ENCODE measurements at regions of chr7 and their contacts with region 1.

Region 1: DNA sequence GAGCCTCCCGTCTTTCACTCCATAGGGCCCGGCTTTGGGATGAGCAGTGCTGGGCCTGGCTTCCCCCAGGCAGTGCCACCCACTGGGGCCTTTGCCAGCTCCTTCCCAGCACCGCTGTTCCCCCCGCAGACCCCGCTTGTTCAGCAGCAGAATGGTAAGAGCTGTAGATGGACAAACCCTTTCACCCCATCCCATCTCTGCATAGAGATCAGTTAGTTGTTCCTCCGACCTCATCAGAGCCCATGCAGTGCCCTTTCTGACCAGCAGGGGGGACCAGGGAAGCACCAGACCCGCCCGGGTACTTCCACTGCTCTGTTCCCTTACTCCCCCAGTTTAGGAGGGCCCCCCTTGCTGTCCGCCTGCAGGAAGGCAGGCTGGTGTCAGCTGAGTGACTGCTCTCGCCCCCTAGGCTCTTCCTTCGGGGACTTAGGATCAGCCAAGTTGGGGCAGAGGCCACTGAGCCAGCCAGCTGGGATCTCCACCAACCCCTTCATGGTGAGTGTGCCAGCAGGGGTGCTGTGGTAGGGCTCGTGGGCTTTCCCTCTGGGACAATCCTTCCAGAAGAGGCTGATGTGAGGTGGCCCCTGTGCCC is 9.8 kb downstream of the SAP25 start:
- DNase-seq: peak; percentile 92
- H3K4me3 Mint-ChIP-seq: no peak overlapping the region
- H3K27ac Mint-ChIP-seq: no peak overlapping the region
- H3K4me1 Mint-ChIP-seq: peaks cover 36% of the 10 kb centered on the region
- H3K27me3 Mint-ChIP-seq: peaks cover 2% of the 10 kb centered on the region

Region 2: DNA sequence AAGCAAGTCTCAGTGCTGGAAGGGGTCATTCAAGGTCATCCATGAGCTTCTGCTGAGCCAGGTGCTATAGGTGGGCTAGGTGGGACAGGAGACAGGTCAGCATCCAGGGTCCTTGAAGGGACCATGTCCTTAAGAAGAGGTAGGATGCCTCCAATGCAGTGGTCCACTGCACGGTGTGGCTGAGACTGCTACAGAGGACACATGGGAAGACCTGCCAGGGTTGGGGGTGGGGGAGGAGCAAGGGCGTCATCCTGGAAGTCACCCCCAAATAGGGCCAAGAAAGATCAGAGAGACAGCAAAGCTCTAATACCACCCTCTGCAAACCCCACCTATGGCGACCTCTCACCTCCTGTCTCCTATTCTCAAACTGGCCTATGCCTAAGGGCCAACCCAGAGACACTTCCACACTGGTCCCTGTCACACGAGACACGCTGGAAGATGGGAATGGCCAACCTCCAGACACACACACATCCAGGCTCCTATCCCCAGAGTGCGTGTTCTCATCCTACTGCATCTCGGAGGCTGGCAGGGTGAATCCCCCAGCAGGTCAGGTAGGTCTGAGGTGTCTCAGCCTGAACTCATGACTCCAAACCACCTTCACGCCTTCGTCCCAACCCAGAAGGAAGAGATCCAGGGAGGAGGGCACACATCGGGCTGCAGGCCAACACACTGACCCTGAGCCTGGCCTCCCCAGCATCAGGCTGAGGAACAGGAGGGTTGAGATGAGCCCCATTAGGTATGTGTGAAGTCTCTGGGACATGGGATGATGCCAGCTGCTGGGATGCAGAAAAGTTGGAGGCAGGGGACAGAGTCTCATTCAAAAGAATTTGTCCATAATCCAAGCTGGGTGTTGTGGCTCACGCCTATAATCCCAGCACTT is 122.0 kb before region 1 on chr7:
- CTCF ChIA-PET with region 1: no interaction called
- DNase-seq: no peak
- H3K4me3 Mint-ChIP-seq: no peak overlapping the region
- H3K27ac Mint-ChIP-seq: no peak overlapping the region
- H3K4me1 Mint-ChIP-seq: peaks cover 31% of the 10 kb centered on the region
- H3K27me3 Mint-ChIP-seq: no peaks in the 10 kb centered on the region

Region 3: GRCh38 chr7:100478966-100479665 is 84.8 kb before region 1 on chr7 and contains the start of gene TSC22D4:
- CTCF ChIA-PET with region 1: interaction called, 26 read pairs
- DNase-seq: peak; percentile 94
- H3K4me3 Mint-ChIP-seq: peak within 1 kb of the TSS; percentile 90
- H3K27ac Mint-ChIP-seq: peak within 1 kb of the TSS; percentile 93
- H3K4me1 Mint-ChIP-seq: peaks cover 47% of the 10 kb centered on the region
- H3K27me3 Mint-ChIP-seq: peaks cover 3% of the 10 kb centered on the region

Region 4: DNA sequence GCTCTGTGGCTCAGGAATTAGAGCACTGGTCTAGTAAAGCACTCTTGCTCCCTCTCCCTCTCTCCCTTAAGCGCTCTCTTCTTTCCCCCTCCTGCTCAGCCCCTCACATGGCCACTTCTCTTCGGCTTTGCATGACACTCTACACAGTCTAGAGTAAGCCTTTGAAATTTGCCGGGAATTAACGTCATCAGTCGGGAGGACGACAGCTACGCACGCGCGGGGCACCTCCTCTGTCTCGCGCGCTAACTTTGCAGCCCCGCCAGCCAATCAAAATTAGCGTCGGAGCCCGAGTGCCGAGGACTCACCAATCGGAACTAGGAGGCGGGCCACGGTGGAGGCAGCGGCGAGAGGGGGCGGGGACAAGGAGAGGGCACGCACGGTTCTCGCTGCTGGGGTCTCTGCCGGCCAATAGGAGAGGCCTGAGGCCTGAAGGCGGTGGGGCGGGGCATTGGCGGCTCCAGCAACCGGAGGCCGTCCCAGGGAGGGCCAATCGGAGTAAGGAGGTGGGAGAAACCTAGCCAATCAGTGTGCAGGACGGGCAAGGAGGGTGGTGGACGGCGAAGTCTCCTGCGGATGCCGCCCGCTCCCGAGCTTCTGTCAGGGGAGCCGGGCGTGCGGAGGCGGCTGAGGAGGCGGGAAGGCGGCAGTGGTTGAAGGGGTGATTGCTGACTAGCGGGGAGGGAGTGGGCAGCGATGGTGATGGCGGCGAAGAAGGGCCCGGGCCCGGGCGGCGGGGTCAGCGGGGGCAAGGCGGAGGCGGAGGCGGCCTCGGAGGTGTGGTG is 25.1 kb before region 1 on chr7 and contains the start of gene AGFG2:
- CTCF ChIA-PET with region 1: interaction called, 16 read pairs
- DNase-seq: peak; percentile 100
- H3K4me3 Mint-ChIP-seq: peak within 1 kb of the TSS; percentile 98
- H3K27ac Mint-ChIP-seq: peak within 1 kb of the TSS; percentile 84
- H3K4me1 Mint-ChIP-seq: peaks cover 56% of the 10 kb centered on the region
- H3K27me3 Mint-ChIP-seq: peaks cover 4% of the 10 kb centered on the region

Region 5: GRCh38 chr7:100586266-100587025 is 22.5 kb after region 1 on chr7 and contains the start of gene FBXO24:
- CTCF ChIA-PET with region 1: interaction called, 130 read pairs
- DNase-seq: peak; percentile 100
- H3K4me3 Mint-ChIP-seq: peak within 1 kb of the TSS; percentile 89
- H3K27ac Mint-ChIP-seq: peak within 1 kb of the TSS; percentile 98
- H3K4me1 Mint-ChIP-seq: peaks cover 36% of the 10 kb centered on the region
- H3K27me3 Mint-ChIP-seq: peaks cover 30% of the 10 kb centered on the region